Breast epithelium (tissue), 4 donors: ENCODE measurements at regions of chr9 and their contacts with region 1.

Region 1: GRCh38 chr9:7500521-7500920 is 299.1 kb downstream of the DMAC1 start:
- DNase-seq: no peak
- H3K4me3 ChIP-seq: no peak overlapping the region
- H3K27ac ChIP-seq: no peak overlapping the region
- H3K4me1 ChIP-seq: no peaks in the 10 kb centered on the region
- H3K27me3 ChIP-seq: no peaks in the 10 kb centered on the region
- CTCF ChIP-seq: no peak
- POLR2A ChIP-seq: no peak

Region 2: DNA sequence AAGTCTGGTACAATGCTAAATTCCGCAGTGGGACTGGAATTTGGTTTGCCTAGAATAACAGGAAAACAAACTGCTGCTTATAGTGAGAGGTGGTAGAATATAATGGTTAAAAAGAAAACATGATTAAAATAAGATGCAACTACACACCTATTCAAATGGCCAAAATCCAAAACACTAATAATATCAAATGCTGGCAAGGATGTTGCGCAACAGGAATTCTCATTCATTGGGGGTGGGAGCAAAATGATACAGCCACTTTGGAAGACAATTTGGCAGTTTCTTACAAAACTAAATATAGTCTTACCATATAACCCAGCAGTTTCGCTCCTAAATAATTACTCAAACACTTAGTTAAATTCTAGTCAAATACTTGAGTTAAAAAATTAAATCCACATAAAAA is 1223.1 kb before region 1 on chr9:
- intact Hi-C with region 1: no loop called
- DNase-seq: no peak
- H3K4me3 ChIP-seq: no peak overlapping the region
- H3K27ac ChIP-seq: no peak overlapping the region
- H3K4me1 ChIP-seq: no peaks in the 10 kb centered on the region
- H3K27me3 ChIP-seq: no peaks in the 10 kb centered on the region
- CTCF ChIP-seq: no peak
- POLR2A ChIP-seq: no peak

Region 3: GRCh38 chr9:7467186-7467585 is 33.3 kb before region 1 on chr9:
- intact Hi-C with region 1: loop called (anchors 2 kb)
- DNase-seq: no peak
- H3K4me3 ChIP-seq: no peak overlapping the region
- H3K27ac ChIP-seq: no peak overlapping the region
- H3K4me1 ChIP-seq: no peaks in the 10 kb centered on the region
- H3K27me3 ChIP-seq: no peaks in the 10 kb centered on the region
- CTCF ChIP-seq: no peak
- POLR2A ChIP-seq: no peak